ENCODE measurements at regions of chr10 and their contacts with region 1.

Region 1: GRCh38 chr10:6202684-6203330 is at the start of gene PFKFB3:
- DNase-seq: peak; percentile 90
- ATAC-seq: peak; percentile 76
- H3K4me3 ChIP-seq: peak within 1 kb of the TSS; percentile 62 to 75 (median 74)
- H3K4me3 Mint-ChIP-seq: peak within 1 kb of the TSS; percentile 97
- H3K27ac ChIP-seq: peak within 1 kb of the TSS; percentile 24 to 58
- H3K27ac Mint-ChIP-seq: peak within 1 kb of the TSS; percentile 86
- H3K4me1 ChIP-seq: peaks cover 13 to 29% of the 10 kb centered on the region in 2 donors
- H3K4me1 Mint-ChIP-seq: peaks cover 26% of the 10 kb centered on the region
- H3K27me3 ChIP-seq: no peaks in the 10 kb centered on the region
- H3K27me3 Mint-ChIP-seq: no peaks in the 10 kb centered on the region
- CTCF ChIP-seq: peak; percentile 91
- total RNA-seq, gene PFKFB3: 239 and 251 TPM in 2 replicates

Region 2: DNA sequence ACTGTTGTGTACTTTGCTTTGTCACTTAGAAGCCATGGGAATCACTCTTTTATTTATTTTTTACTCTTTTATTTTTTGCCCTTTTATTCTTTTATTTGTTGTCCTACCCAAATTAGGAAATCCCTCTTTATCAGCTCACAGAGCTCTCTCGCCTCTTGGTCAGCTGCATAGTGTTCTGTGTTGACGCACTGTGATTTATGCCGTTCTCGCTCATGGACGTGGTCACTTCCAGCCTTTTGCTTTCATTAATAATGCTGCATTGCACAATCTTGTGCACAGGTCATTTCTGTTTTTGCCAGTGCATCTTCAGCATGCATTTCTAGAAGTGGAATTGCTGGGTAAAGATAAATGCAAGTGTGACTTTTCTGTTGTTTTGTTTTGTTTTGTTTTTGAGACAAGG is 270.5 kb before region 1 on chr10:
- CTCF ChIA-PET with region 1: no interaction called
- POLR2A ChIA-PET with region 1: no interaction called
- intact Hi-C with region 1: no loop called
- DNase-seq: no peak
- ATAC-seq: no peak
- H3K4me3 ChIP-seq: no peak overlapping the region
- H3K4me3 Mint-ChIP-seq: no peak overlapping the region
- H3K27ac ChIP-seq: no peak overlapping the region
- H3K27ac Mint-ChIP-seq: no peak overlapping the region
- H3K4me1 ChIP-seq: no peaks in the 10 kb centered on the region
- H3K4me1 Mint-ChIP-seq: no peaks in the 10 kb centered on the region
- H3K27me3 ChIP-seq: no peaks in the 10 kb centered on the region
- H3K27me3 Mint-ChIP-seq: no peaks in the 10 kb centered on the region
- CTCF ChIP-seq: no peak

Region 3: DNA sequence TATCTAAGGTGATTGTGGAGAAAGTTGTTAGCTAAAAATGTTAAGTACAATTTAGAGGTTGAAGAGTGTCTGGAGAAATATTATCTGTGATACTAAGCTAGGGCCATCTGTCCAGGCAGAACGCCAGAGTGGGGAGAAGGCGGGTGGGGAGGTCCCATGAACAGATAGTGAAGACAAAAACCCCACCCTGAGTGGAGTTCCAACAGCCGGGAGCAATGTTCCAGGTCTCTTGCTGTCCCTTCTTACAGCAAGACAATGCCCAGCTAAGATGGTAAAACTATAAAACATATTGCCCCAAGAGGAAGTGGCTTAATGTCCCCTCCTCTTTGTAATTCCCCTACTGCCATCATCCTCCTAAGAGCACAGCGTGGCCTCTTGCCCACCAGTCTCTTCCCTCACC is 215.1 kb before region 1 on chr10:
- CTCF ChIA-PET with region 1: no interaction called
- POLR2A ChIA-PET with region 1: no interaction called
- intact Hi-C with region 1: no loop called
- DNase-seq: peak; percentile 29
- ATAC-seq: no peak
- H3K4me3 ChIP-seq: no peak overlapping the region
- H3K4me3 Mint-ChIP-seq: peak overlapping the region; percentile 42
- H3K27ac ChIP-seq: no peak overlapping the region
- H3K27ac Mint-ChIP-seq: peak overlapping the region; percentile 54
- H3K4me1 ChIP-seq: peaks cover 7 to 9% of the 10 kb centered on the region in 2 donors
- H3K4me1 Mint-ChIP-seq: peaks cover 12% of the 10 kb centered on the region
- H3K27me3 ChIP-seq: no peaks in the 10 kb centered on the region
- H3K27me3 Mint-ChIP-seq: no peaks in the 10 kb centered on the region
- CTCF ChIP-seq: no peak

Region 4: GRCh38 chr10:6014241-6014761 is 188.5 kb before region 1 on chr10:
- CTCF ChIA-PET with region 1: interaction called, 14 read pairs
- POLR2A ChIA-PET with region 1: no interaction called
- intact Hi-C with region 1: no loop called
- DNase-seq: peak; percentile 79
- ATAC-seq: peak; percentile 79
- H3K4me3 ChIP-seq: no peak overlapping the region
- H3K4me3 Mint-ChIP-seq: no peak overlapping the region
- H3K27ac ChIP-seq: peak overlapping the region; percentile 34 to 57
- H3K27ac Mint-ChIP-seq: peak overlapping the region; percentile 67
- H3K4me1 ChIP-seq: peaks cover 4 to 9% of the 10 kb centered on the region in 2 donors
- H3K4me1 Mint-ChIP-seq: peaks cover 10% of the 10 kb centered on the region
- H3K27me3 ChIP-seq: no peaks in the 10 kb centered on the region
- H3K27me3 Mint-ChIP-seq: no peaks in the 10 kb centered on the region
- CTCF ChIP-seq: peak; percentile 86

Region 5: DNA sequence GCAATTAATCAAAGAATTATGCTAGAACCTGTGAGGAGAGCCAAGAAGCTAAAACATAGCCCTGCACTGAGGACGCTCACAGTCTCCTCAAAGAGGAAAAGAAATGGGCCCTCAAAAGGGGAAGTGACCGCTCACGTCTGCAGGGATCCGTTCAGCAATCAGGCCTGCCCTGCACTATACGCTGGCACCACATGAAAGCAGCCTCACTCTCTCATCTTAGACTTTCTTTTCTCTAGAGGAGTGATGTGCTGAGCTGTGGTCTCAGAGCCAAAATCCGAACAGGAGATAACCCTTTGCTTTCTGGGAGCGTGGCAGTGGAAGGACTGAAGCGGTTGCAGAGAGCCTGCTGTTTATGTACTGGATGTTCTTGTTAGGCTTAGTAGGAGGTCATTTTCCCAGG is 134.4 kb before region 1 on chr10:
- CTCF ChIA-PET with region 1: no interaction called
- POLR2A ChIA-PET with region 1: no interaction called
- intact Hi-C with region 1: no loop called
- DNase-seq: peak; percentile 79
- ATAC-seq: peak; percentile 69
- H3K4me3 ChIP-seq: peak overlapping the region in 2 of 5 experiments; percentile 19 to 40
- H3K4me3 Mint-ChIP-seq: peak overlapping the region; percentile 85
- H3K27ac ChIP-seq: peak overlapping the region; percentile 80 to 91
- H3K27ac Mint-ChIP-seq: peak overlapping the region; percentile 99
- H3K4me1 ChIP-seq: peaks cover 59 to 64% of the 10 kb centered on the region in 2 donors
- H3K4me1 Mint-ChIP-seq: peaks cover 83% of the 10 kb centered on the region
- H3K27me3 ChIP-seq: no peaks in the 10 kb centered on the region
- H3K27me3 Mint-ChIP-seq: no peaks in the 10 kb centered on the region
- CTCF ChIP-seq: no peak

Region 6: GRCh38 chr10:6144406-6145165 is 58.2 kb before region 1 on chr10:
- CTCF ChIA-PET with region 1: interaction called, 29 read pairs
- POLR2A ChIA-PET with region 1: interaction called, 3 read pairs
- intact Hi-C with region 1: loop called (anchors 1 kb)
- DNase-seq: peak; percentile 91
- ATAC-seq: peak; percentile 87
- H3K4me3 ChIP-seq: peak overlapping the region; percentile 63 to 93 (median 74)
- H3K4me3 Mint-ChIP-seq: peak overlapping the region; percentile 91
- H3K27ac ChIP-seq: peak overlapping the region; percentile 49 to 79
- H3K27ac Mint-ChIP-seq: peak overlapping the region; percentile 74
- H3K4me1 ChIP-seq: peaks cover 26 to 50% of the 10 kb centered on the region in 2 donors
- H3K4me1 Mint-ChIP-seq: peaks cover 56% of the 10 kb centered on the region
- H3K27me3 ChIP-seq: peaks cover 0 to 17% (median 5%) of the 10 kb centered on the region in 4 experiments
- H3K27me3 Mint-ChIP-seq: peaks cover 3% of the 10 kb centered on the region
- CTCF ChIP-seq: no peak

Region 7: DNA sequence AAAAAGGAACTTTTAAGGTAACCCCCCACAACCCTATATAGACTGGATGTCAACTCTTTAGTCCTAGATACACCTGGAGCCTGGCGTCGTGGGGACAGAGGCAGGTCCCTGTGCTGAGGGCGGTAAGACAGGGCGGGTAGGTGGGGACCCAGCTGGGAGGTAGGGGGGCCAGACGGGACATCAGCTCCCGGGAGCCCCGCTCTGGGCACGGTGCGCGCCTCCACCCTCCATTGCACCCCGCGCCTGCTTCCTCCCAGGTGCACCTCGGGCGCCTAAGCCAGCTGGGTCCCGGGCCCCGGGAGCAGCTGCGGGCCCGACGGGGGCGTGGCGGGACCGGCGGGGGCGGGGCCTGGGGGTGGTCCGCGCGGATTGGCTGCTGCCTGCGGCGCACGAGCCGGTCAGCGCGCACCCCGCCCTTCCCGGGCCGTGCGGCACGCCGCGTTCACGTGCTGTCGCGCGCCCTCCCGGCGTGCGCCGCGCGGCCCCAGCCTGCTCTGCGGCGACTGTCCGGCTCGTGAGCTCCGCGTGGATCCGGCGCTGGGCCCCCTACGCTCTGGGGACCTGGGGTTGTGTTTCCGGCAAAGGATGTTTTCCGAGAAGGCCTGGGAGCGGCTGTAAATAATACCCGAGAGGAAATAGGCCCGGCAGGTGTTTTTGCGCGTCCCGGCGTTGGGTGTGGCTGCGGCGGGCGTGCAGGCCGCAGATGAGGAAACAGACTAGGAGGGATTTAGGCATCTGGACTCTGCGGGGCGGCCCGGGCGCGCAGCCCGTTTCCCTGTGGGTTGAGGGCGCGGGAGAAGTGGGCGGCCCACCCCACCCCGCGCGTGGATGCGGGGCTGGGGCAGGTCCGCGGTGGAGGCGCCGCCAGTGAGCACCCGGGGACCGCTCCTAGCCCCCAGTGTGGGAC is 39.2 kb before region 1 on chr10:
- CTCF ChIA-PET with region 1: interaction called, 16 read pairs
- POLR2A ChIA-PET with region 1: interaction called, 6 read pairs
- intact Hi-C with region 1: loop called (anchors 1 kb)
- DNase-seq: peak; percentile 95
- ATAC-seq: peak; percentile 96
- H3K4me3 ChIP-seq: peak overlapping the region in 4 of 5 experiments; percentile 69 to 84 (median 72)
- H3K4me3 Mint-ChIP-seq: peak overlapping the region; percentile 97
- H3K27ac ChIP-seq: peak overlapping the region; percentile 89 to 96
- H3K27ac Mint-ChIP-seq: peak overlapping the region; percentile 98
- H3K4me1 ChIP-seq: peaks cover 16 to 19% of the 10 kb centered on the region in 2 donors
- H3K4me1 Mint-ChIP-seq: peaks cover 39% of the 10 kb centered on the region
- H3K27me3 ChIP-seq: no peaks in the 10 kb centered on the region
- H3K27me3 Mint-ChIP-seq: no peaks in the 10 kb centered on the region
- CTCF ChIP-seq: no peak

Region 8: DNA sequence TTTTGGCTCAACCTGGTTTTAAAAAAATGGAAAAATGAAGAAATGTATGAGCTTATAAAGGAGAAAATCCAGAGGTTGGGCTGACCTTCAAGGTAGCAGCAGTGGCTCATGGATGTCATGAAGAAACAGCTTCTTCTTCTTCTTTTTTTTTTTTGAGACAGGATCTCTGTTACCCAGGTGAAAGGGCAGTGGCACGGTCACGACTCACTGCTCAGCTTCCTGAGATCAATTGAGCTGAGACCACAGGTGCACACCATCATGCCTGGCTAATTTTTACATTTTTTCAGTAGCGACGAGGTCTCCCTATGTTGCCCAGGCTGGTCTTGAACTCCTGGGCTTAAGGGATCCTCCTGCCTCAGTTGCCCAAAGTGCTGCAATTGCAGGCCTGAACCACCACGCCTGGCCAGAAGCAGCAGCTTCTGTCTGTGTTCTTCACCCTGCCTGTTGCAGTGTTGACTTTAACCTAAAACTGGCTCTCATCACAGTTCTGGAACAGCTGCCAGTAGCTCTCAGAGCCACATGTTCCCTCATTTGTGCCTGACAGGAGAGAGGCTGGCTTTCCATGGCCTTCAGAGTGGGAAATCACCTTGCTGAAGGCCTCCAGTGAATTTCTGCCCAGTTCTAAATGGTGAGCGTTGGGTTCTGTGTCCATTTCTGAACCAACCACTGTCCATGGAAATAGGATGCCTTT is 117.7 kb after region 1 on chr10:
- CTCF ChIA-PET with region 1: interaction called, 14 read pairs
- POLR2A ChIA-PET with region 1: no interaction called
- intact Hi-C with region 1: loop called (anchors 2 kb)
- DNase-seq: peak; percentile 83
- ATAC-seq: peak; percentile 93
- H3K4me3 ChIP-seq: no peak overlapping the region
- H3K4me3 Mint-ChIP-seq: no peak overlapping the region
- H3K27ac ChIP-seq: no peak overlapping the region
- H3K27ac Mint-ChIP-seq: peak overlapping the region; percentile 84
- H3K4me1 ChIP-seq: peaks cover 38 to 51% of the 10 kb centered on the region in 2 donors
- H3K4me1 Mint-ChIP-seq: peaks cover 34% of the 10 kb centered on the region
- H3K27me3 ChIP-seq: no peaks in the 10 kb centered on the region
- H3K27me3 Mint-ChIP-seq: no peaks in the 10 kb centered on the region
- CTCF ChIP-seq: no peak

Region 9: DNA sequence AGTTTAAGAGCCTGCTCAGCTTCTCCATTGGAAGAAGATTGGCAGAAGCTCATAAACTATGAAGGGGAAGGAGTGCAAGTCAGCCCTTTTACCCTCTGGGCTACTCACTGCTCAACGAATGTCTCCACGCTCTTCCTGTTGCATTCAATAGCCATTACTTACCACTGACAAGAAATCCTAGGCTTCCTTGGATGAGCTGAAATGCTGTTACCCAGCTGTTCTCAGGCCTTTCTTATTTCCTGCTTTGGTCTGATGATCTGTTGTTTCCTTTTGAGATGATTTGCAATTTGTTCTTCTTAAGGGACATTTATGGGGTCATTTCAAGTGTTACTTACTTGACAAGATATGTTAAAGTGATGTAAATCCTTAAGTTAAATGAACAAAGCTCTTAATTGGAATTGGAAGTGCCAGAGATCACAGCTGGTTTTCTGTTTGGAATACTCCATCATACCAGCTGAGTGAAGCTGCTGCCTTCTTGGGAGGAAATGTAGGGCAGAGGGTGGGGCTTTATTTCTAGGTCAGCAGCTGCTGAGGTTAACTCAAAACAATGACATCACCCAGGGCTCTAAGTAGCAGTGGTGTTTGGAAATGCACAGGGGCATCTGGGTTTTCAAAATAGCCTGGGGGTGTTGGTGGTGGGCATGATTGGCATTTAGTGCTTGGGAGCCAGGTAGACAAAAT is 207.3 kb after region 1 on chr10:
- CTCF ChIA-PET with region 1: interaction called, 48 read pairs
- POLR2A ChIA-PET with region 1: interaction called, 4 read pairs
- intact Hi-C with region 1: no loop called
- DNase-seq: no peak
- ATAC-seq: no peak
- H3K4me3 ChIP-seq: no peak overlapping the region
- H3K4me3 Mint-ChIP-seq: no peak overlapping the region
- H3K27ac ChIP-seq: no peak overlapping the region
- H3K27ac Mint-ChIP-seq: no peak overlapping the region
- H3K4me1 ChIP-seq: peaks cover 0 to 5% of the 10 kb centered on the region in 2 donors
- H3K4me1 Mint-ChIP-seq: peaks cover 9% of the 10 kb centered on the region
- H3K27me3 ChIP-seq: peaks cover 0 to 4% (median 2%) of the 10 kb centered on the region in 4 experiments
- H3K27me3 Mint-ChIP-seq: peaks cover 29% of the 10 kb centered on the region
- CTCF ChIP-seq: no peak